Natural killer cell (primary cell): ENCODE measurements at regions of chr16 and their contacts with region 1.

Region 1: DNA sequence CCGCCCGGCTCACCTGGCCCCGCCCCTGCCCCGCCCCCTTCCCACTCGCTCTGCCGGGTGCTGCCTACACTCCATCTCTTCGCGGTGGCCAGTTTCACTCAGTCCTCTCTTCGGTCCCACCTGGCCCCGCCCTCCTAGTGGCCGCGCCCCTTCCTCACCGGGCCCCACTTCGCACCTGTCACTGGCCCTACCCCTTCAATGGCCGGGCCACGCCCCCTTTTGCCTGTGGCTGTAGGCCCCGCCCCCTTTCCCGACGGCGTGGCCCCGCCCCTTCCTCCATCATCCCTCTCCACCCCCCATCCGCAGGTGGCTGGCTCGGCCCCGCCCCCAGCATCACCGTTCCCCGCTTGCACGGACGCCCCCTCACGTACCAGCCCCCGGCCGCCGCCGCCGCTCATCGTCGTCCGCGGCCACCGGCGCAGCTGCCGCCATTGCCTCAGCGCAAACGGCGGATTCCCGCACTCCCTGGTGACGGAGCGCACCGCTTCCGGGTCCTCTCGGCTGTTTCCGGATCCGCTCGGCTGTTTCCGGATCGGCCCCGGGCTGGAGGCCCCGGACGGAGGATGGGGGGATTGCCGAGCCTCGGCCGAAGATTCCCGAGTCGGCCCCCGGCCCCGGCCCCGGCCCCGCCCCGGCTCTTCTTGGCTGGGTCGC is at the start of gene RABEP2:
- DNase-seq: peak; percentile 95 to 98
- ATAC-seq: peak; percentile 81 to 93 (median 85)
- H3K4me3 ChIP-seq: peak within 1 kb of the TSS; percentile 65
- H3K4me3 Mint-ChIP-seq: peak within 1 kb of the TSS; percentile 98
- H3K27ac ChIP-seq: peak within 1 kb of the TSS; percentile 96
- H3K27ac Mint-ChIP-seq: peak within 1 kb of the TSS; percentile 98 to 99
- H3K4me1 ChIP-seq: peaks cover 17% of the 10 kb centered on the region
- H3K4me1 Mint-ChIP-seq: peaks cover 26 to 34% of the 10 kb centered on the region in 2 donors
- H3K27me3 ChIP-seq: no peaks in the 10 kb centered on the region
- H3K27me3 Mint-ChIP-seq: no peaks in the 10 kb centered on the region
- CTCF ChIP-seq: no peak
- total RNA-seq, gene RABEP2: 53.4 to 63.4 (median 60.1) TPM

Region 2: GRCh38 chr16:28587386-28587785 is 337.5 kb before region 1 on chr16:
- intact Hi-C with region 1: no loop called
- DNase-seq: no peak
- ATAC-seq: no peak
- H3K4me3 ChIP-seq: no peak overlapping the region
- H3K4me3 Mint-ChIP-seq: no peak overlapping the region
- H3K27ac ChIP-seq: no peak overlapping the region
- H3K27ac Mint-ChIP-seq: no peak overlapping the region
- H3K4me1 ChIP-seq: no peaks in the 10 kb centered on the region
- H3K4me1 Mint-ChIP-seq: peaks cover 0 to 7% of the 10 kb centered on the region in 2 donors
- H3K27me3 ChIP-seq: no peaks in the 10 kb centered on the region
- H3K27me3 Mint-ChIP-seq: no peaks in the 10 kb centered on the region
- CTCF ChIP-seq: no peak

Region 3: DNA sequence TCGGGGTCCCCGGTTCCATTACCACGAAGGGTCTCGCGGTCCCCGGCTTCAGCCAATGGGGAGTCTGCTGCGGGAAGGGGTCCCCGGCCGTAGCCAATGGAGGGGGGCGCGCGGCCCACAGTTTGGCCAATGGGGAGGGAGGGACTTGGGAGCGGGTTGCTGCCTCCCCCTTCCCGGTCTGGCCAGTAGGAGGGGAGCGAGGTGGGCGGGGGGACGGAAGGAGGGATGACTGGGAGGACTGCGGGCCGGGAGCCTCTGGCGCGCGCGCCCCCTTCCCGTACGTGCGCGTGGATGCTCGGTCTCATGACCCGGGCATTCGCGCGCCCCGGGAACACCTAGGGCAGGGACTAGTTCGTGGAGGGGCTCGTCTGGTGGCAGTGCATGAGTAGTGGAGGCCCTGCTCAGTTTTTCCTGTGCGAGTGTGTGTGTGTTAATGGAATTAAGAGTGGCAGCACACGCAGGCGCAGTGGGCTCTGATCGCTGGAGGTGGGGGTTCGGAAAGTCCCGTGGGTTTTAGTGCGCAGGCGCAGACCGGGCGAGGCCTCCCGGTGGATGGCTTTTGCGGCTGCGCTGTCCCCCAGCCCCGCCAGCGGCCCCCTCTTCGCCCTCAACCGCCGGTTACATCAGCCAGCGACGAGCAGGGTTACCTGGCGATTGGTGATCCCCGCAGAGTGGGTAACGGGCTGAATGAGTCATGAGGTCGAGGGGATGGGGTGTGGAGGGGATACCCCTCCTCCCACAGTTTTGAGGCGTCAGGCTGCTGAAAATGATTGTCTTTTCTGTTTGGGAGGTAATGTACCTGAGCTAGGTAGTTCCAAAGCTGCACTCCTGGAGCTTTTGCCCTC is 100.8 kb before region 1 on chr16:
- intact Hi-C with region 1: loop called (anchors 5 kb)
- DNase-seq: peak; percentile 94 to 98
- ATAC-seq: peak; percentile 61 to 77 (median 68)
- H3K4me3 ChIP-seq: peak overlapping the region; percentile 90
- H3K4me3 Mint-ChIP-seq: peak overlapping the region; percentile 94
- H3K27ac ChIP-seq: peak overlapping the region; percentile 98
- H3K27ac Mint-ChIP-seq: peak overlapping the region; percentile 96 to 99
- H3K4me1 ChIP-seq: peaks cover 20% of the 10 kb centered on the region
- H3K4me1 Mint-ChIP-seq: peaks cover 33 to 36% of the 10 kb centered on the region in 2 donors
- H3K27me3 ChIP-seq: no peaks in the 10 kb centered on the region
- H3K27me3 Mint-ChIP-seq: no peaks in the 10 kb centered on the region
- CTCF ChIP-seq: no peak

Region 4: GRCh38 chr16:28863929-28864793 is 60.7 kb before region 1 on chr16:
- intact Hi-C with region 1: loop called (anchors 5 kb)
- DNase-seq: peak in 1 of 2 donors; percentile 67
- ATAC-seq: no peak
- H3K4me3 ChIP-seq: peak overlapping the region; percentile 99
- H3K4me3 Mint-ChIP-seq: peak overlapping the region; percentile 98
- H3K27ac ChIP-seq: peak overlapping the region; percentile 98
- H3K27ac Mint-ChIP-seq: peak overlapping the region; percentile 95 to 96
- H3K4me1 ChIP-seq: peaks cover 29% of the 10 kb centered on the region
- H3K4me1 Mint-ChIP-seq: peaks cover 18 to 40% of the 10 kb centered on the region in 2 donors
- H3K27me3 ChIP-seq: no peaks in the 10 kb centered on the region
- H3K27me3 Mint-ChIP-seq: no peaks in the 10 kb centered on the region
- CTCF ChIP-seq: no peak

Region 5: DNA sequence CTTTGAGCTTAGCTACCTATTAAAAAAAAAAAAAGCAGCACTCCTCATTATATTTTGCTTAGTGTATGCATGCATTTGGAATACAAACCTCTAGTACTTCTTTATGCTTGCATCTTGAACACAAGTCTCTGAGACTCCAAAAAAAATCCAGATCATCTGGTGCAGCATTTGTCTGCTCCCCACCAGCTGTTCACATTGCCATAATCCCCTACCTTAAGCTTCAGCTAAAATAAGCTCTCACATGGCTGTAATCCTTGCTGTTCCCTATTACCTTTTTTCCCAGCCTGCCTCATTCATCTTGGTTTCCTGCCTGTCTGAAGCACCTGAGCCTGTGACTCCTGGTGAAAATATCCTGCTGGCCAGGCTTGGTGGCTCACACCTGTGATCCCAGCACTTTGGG is 18.4 kb after region 1 on chr16:
- intact Hi-C with region 1: loop called (anchors 1 kb)
- DNase-seq: no peak
- ATAC-seq: no peak
- H3K4me3 ChIP-seq: no peak overlapping the region
- H3K4me3 Mint-ChIP-seq: no peak overlapping the region
- H3K27ac ChIP-seq: no peak overlapping the region
- H3K27ac Mint-ChIP-seq: no peak overlapping the region
- H3K4me1 ChIP-seq: peaks cover 12% of the 10 kb centered on the region
- H3K4me1 Mint-ChIP-seq: peaks cover 8 to 13% of the 10 kb centered on the region in 2 donors
- H3K27me3 ChIP-seq: no peaks in the 10 kb centered on the region
- H3K27me3 Mint-ChIP-seq: no peaks in the 10 kb centered on the region
- CTCF ChIP-seq: no peak

Region 6: DNA sequence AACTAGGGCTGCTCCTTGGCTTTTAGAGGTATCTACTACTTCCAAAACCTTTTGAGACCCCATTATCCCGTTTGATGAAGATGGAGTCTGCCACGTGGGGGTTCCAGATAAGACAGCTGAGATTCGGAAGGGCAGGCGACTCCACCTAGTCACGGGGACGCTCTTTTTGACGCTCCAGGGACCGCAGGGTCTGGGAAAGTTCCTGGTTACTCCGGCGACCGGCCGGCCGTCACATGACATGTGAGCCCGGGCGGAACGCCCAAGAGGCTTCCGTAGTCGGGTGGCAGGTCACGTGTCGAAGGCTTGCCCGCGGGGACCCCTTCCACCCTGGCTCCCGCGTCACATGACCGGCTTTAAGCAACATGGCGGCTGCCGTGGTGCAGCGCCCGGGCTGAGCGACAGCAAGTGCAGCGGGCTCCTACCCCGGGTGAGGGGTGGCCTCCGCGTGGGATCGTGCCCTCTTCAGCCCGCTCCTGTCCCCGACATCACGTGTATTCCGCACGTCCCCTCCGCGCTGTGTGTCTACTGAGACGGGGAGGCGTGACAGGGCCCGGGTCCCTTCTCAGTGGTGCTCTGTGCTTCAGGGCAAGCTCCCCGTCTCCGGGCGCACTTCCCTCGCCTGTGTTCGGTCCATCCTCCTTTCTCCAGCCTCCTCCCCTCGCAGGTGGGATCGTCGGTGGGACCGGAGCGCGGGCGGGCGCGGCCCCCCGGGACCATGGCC is 49.7 kb after region 1 on chr16 and contains the start of gene SPNS1:
- intact Hi-C with region 1: loop called (anchors 1 kb)
- DNase-seq: peak; percentile 92 to 94
- ATAC-seq: peak; percentile 91 to 96 (median 94)
- H3K4me3 ChIP-seq: peak within 1 kb of the TSS; percentile 65
- H3K4me3 Mint-ChIP-seq: peak within 1 kb of the TSS; percentile 99
- H3K27ac ChIP-seq: peak within 1 kb of the TSS; percentile 57
- H3K27ac Mint-ChIP-seq: peak within 1 kb of the TSS; percentile 95 to 97
- H3K4me1 ChIP-seq: peaks cover 18% of the 10 kb centered on the region
- H3K4me1 Mint-ChIP-seq: peaks cover 35 to 42% of the 10 kb centered on the region in 2 donors
- H3K27me3 ChIP-seq: no peaks in the 10 kb centered on the region
- H3K27me3 Mint-ChIP-seq: no peaks in the 10 kb centered on the region
- CTCF ChIP-seq: no peak
- total RNA-seq, gene SPNS1: 36.0 to 44.3 (median 36.9) TPM